ENCODE measurements at regions of chr6 and their contacts with region 1.

Region 1: GRCh38 chr6:43667245-43668150 is 20.1 kb downstream of the MRPS18A start:
- DNase-seq: peak; percentile 88
- ATAC-seq: peak; percentile 63
- H3K4me3 Mint-ChIP-seq: peak overlapping the region; percentile 55
- H3K27ac Mint-ChIP-seq: peak overlapping the region; percentile 7; the same call in 1 of the 2 replicates
- H3K4me1 Mint-ChIP-seq: peaks cover 36% of the 10 kb centered on the region
- H3K27me3 Mint-ChIP-seq: peaks cover 9% of the 10 kb centered on the region
- CTCF ChIP-seq: peak; percentile 81

Region 2: GRCh38 chr6:43629505-43630300 is 37.8 kb before region 1 on chr6:
- CTCF ChIA-PET with region 1: interaction called, 15 read pairs
- POLR2A ChIA-PET with region 1: interaction called, 7 read pairs
- DNase-seq: peak; percentile 94
- ATAC-seq: peak; percentile 81
- H3K4me3 Mint-ChIP-seq: peak overlapping the region; percentile 98
- H3K27ac Mint-ChIP-seq: peak overlapping the region; percentile 100
- H3K4me1 Mint-ChIP-seq: peaks cover 17% of the 10 kb centered on the region
- H3K27me3 Mint-ChIP-seq: no peaks in the 10 kb centered on the region
- CTCF ChIP-seq: no peak

Region 3: DNA sequence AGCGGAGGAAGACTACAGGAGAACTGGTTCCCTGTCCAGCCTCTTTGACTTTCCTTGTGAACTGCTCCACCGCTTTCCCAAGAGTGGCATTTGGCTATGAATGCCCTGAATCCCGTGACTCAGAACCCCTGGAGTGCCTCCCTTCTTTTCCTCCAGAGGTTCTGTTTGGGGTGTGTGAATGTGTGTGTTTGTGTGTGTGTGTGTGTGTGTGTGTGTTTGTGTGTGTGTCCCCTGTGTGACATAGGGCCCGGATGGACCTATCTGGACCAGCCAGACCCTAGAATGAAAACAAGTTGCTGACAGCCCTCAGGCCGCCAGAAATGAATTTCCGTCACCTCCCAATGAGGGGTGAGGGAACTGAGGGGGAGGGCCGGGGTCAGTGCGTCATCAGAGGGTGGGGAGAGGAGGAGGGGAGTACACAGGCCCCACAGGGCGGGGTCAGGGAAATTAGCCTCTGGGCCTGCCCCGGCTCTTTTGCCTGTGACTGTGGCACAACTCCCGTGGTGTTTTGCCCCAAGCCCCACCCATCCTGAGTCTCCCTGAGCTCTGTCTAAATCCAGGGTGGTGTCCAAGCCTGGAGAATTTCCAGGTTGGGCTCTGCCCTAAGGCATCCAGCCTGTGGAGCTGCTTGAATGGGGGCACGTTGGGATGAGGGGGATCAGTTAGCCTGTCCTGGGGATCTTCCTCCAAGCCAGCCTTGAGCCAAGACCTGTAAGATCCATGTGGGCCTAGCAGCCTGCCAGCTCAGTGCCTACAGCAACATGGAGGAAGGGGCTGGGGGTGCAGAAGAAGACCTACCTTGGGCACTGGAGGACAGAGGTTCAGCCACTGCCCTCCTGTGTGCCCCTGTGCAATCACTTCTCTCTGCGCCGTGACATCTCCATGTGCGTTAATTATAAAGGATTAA is 35.3 kb after region 1 on chr6:
- CTCF ChIA-PET with region 1: interaction called, 24 read pairs
- POLR2A ChIA-PET with region 1: no interaction called
- DNase-seq: peak; percentile 95
- ATAC-seq: peak; percentile 86
- H3K4me3 Mint-ChIP-seq: peak overlapping the region; percentile 51
- H3K27ac Mint-ChIP-seq: peak overlapping the region; percentile 99
- H3K4me1 Mint-ChIP-seq: peaks cover 85% of the 10 kb centered on the region
- H3K27me3 Mint-ChIP-seq: no peaks in the 10 kb centered on the region; the same call in 1 of the 2 replicates
- CTCF ChIP-seq: no peak

Region 4: DNA sequence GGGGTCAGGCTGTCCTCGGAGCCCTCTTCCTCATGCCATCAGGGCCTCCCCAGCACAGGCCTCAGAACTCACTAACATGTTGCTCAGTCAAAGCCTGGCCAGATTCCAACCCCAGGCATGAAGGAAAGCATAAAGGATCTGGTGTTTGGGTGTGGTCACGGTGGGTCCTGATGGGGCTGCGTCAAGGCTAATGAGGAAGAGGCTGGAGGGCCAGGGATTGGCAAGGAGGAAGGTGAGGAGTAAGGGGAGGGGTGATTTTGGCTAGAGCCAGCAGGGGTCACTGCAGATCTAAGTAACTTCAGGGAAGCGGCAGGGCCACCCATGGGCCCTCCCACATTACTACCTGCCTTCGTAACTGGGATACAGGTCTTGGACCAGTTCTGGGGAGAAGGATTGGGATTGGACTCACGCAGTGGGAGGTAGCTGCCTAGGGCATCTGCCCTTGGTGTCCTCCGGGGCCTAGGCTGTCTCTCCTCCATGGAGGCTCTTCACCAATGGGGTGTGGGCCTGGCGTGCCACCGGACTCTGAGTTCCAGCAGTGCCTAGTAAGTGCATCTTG is 56.3 kb after region 1 on chr6:
- CTCF ChIA-PET with region 1: interaction called, 12 read pairs
- POLR2A ChIA-PET with region 1: no interaction called
- DNase-seq: peak; percentile 80
- ATAC-seq: peak; percentile 93
- H3K4me3 Mint-ChIP-seq: no peak overlapping the region
- H3K27ac Mint-ChIP-seq: no peak overlapping the region
- H3K4me1 Mint-ChIP-seq: peaks cover 12% of the 10 kb centered on the region
- H3K27me3 Mint-ChIP-seq: no peaks in the 10 kb centered on the region; the same call in 1 of the 2 replicates
- CTCF ChIP-seq: peak; percentile 60

Region 5: GRCh38 chr6:43774776-43775534 is 107.5 kb after region 1 on chr6:
- CTCF ChIA-PET with region 1: interaction called, 68 read pairs
- POLR2A ChIA-PET with region 1: interaction called, 12 read pairs
- DNase-seq: peak; percentile 85
- ATAC-seq: peak; percentile 46
- H3K4me3 Mint-ChIP-seq: peak overlapping the region; percentile 48
- H3K27ac Mint-ChIP-seq: peak overlapping the region; percentile 82
- H3K4me1 Mint-ChIP-seq: peaks cover 33% of the 10 kb centered on the region
- H3K27me3 Mint-ChIP-seq: peaks cover 2% of the 10 kb centered on the region; the same call in 1 of the 2 replicates
- CTCF ChIP-seq: peak; percentile 82

Region 6: DNA sequence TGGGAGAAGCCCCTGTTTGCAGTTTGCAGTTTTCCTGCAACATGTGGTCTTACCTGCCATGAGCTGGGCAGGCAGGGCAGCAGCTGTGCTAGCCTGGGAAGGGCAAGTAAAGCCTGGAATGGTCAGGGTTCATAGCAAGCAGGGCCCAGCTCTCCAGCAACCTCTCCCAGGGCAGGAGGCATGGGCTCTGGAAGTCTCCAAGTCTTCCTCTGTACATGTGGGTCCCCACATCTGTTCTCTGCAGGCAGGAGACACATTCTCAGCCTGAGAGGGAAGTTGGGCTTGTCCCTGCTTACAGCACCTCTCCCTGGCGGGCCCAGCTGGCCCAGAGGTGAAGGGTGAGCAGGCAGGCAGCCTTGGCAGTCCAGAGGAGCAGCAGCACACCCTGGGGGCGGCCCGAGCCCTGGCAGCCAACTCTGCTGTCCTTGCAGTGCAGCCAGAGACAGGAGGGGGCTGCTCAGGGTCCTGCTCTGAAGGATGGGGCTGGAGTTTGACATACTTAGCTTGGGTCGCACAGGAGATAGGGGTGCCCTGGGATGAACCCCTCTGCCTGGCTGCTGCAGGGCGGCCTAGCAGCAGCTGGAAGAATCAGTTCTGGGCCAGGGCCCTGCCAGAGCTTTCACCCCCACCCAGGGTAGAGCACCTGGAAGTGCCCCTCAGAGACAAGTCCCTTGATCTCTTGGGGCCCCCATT is 283.7 kb after region 1 on chr6:
- CTCF ChIA-PET with region 1: interaction called, 22 read pairs
- POLR2A ChIA-PET with region 1: no interaction called
- DNase-seq: peak; percentile 90
- ATAC-seq: peak; percentile 95
- H3K4me3 Mint-ChIP-seq: no peak overlapping the region
- H3K27ac Mint-ChIP-seq: no peak overlapping the region
- H3K4me1 Mint-ChIP-seq: peaks cover 4% of the 10 kb centered on the region
- H3K27me3 Mint-ChIP-seq: no peaks in the 10 kb centered on the region
- CTCF ChIP-seq: no peak; the same call in none of the 2 replicates